ENCODE measurements at regions of chr1 and their contacts with region 1.

Region 1: DNA sequence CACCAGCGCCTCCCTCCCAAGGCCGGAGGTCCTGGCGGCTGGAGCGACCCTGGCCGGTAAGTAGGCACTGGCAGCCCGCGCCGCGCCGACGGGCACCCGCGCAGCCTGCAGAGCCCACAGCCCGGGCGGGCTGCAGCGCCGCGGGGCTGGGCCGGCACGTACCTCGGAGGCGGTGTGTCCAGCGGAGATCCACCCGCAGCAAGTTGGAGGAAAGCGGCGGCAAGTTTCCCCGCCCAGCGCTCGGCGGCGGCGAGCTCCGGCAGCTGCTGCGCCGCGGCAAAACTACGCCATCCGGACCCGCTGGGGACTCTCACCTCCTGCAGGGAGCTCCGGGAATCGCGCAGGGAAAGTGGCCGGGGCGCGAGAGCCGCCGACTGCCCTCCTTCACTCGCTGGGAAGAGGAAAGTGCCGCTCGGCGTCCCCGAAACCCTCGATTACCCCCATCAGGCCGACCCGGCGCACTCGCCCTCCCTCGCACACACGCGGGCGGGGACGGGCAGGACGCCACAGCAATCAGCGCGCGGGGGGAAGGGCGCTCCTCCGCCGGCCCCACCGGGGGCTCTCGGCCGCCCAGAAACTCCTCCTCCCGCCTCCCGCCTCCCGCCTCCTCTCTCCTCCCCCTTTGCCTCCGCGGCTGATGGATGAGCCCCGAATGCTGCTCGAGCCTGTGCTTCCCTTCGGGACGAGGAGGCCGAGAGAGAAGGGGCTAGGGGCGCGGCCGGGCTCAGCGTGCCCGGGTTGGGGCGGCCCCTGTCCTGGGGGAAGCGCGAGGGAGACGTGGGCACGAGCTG is at the start of gene TGFBR3:
- DNase-seq: peak; percentile 91
- H3K4me3 ChIP-seq: peak within 1 kb of the TSS; percentile 81 to 96
- H3K27ac ChIP-seq: peak within 1 kb of the TSS; percentile 87 to 93
- H3K4me1 ChIP-seq: no peaks in the 10 kb centered on the region
- H3K27me3 ChIP-seq: no peaks in the 10 kb centered on the region
- CTCF ChIP-seq: peak in 2 of 4 experiments; percentile 68 to 70
- POLR2A ChIP-seq: peak; percentile 82
- total RNA-seq, gene TGFBR3: 26.4 to 51.7 TPM

Region 2: DNA sequence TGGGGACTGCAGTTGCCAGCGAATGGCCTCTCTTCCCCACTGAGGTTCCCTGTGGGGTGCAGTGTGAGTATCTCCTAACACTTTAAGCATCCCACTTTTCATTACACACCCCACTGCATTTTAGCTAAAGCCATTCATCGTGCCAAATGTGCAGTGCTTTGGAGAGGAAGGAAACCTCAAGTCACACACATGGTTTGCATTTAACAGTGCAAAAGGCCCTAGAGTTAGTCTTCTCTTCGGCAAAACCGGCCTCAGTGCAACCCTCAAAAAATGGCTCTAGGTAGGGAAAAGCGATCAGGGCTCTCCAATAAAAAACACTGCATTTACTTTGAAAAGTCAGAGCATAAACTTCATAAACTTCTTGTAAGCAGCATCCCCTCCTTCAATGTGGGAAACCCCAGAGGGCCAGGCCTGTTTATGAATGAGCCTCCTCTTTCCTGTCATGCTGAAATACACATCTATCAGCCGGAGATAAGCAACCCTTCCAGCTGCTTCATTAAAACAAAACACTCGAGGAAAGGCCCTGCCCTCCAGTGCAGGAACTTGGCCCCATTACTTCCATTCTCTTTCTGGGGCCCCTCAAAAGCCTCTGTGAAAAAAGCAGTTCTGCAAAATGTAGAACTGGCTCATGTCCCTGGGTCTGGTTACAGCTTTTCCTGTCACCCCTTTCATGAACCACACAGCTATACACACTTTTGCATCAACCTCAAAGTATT is 201.3 kb before region 1 on chr1:
- intact Hi-C with region 1: no loop called
- DNase-seq: no peak
- H3K4me3 ChIP-seq: no peak overlapping the region
- H3K27ac ChIP-seq: no peak overlapping the region
- H3K4me1 ChIP-seq: no peaks in the 10 kb centered on the region
- H3K27me3 ChIP-seq: no peaks in the 10 kb centered on the region
- CTCF ChIP-seq: no peak
- POLR2A ChIP-seq: no peak

Region 3: GRCh38 chr1:91725989-91726721 is 159.8 kb before region 1 on chr1:
- intact Hi-C with region 1: loop called (anchors 5 kb)
- DNase-seq: no peak
- H3K4me3 ChIP-seq: no peak overlapping the region
- H3K27ac ChIP-seq: peak overlapping the region; percentile 76 to 77
- H3K4me1 ChIP-seq: peaks cover 6% of the 10 kb centered on the region
- H3K27me3 ChIP-seq: no peaks in the 10 kb centered on the region
- CTCF ChIP-seq: no peak
- POLR2A ChIP-seq: no peak

Region 4: GRCh38 chr1:91830242-91831131 is 55.4 kb before region 1 on chr1:
- intact Hi-C with region 1: loop called (anchors 5 kb)
- DNase-seq: no peak
- H3K4me3 ChIP-seq: no peak overlapping the region
- H3K27ac ChIP-seq: peak overlapping the region; percentile 17 to 52
- H3K4me1 ChIP-seq: peaks cover 4% of the 10 kb centered on the region
- H3K27me3 ChIP-seq: no peaks in the 10 kb centered on the region
- CTCF ChIP-seq: no peak
- POLR2A ChIP-seq: no peak

Region 5: GRCh38 chr1:91929250-91929649 is 43.3 kb after region 1 on chr1:
- intact Hi-C with region 1: no loop called
- DNase-seq: no peak
- H3K4me3 ChIP-seq: no peak overlapping the region
- H3K27ac ChIP-seq: no peak overlapping the region
- H3K4me1 ChIP-seq: no peaks in the 10 kb centered on the region
- H3K27me3 ChIP-seq: no peaks in the 10 kb centered on the region
- CTCF ChIP-seq: no peak
- POLR2A ChIP-seq: no peak

Region 6: GRCh38 chr1:92168657-92169056 is 282.7 kb after region 1 on chr1:
- intact Hi-C with region 1: no loop called
- DNase-seq: no peak
- H3K4me3 ChIP-seq: no peak overlapping the region
- H3K27ac ChIP-seq: no peak overlapping the region
- H3K4me1 ChIP-seq: no peaks in the 10 kb centered on the region
- H3K27me3 ChIP-seq: no peaks in the 10 kb centered on the region
- CTCF ChIP-seq: no peak
- POLR2A ChIP-seq: no peak

Measured in prostate gland (tissue), 2 donors.